OCI-LY7 (cell line): ENCODE measurements at regions of chr2 and their contacts with region 1.

Region 1: DNA sequence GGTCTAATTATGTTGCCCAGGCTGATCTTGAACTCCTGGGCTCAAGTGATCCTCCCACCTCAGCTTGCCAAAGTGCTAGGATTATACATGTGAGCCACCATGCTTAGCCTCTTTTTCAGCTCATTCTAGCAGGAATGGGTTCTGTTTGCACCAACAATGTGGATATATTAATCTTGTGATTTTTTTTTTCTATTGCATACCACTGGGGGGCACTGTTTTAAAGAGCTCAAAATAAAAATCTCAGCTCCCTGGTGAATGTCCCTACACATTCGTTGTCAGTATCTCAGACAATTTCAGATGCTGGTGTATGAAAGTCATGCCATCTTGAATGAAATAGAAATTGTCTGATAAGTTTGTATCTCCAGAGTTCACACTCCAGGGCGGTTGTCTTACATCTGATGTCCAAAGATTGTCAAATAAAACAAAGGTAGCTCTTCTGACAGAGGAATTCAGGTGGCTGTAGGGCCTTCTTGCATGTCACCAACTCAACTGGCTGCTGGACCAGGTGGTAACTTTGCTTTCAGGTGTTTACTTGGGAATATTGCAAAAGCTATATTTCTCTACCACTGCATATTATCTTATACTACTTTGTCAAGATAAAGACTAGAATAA is 3.1 kb upstream of the MATN3 start:
- DNase-seq: peak; percentile 57
- H3K4me3 ChIP-seq: no peak overlapping the region
- H3K27ac ChIP-seq: no peak overlapping the region
- H3K4me1 ChIP-seq: no peaks in the 10 kb centered on the region
- CTCF ChIP-seq: peak; percentile 80

Region 2: DNA sequence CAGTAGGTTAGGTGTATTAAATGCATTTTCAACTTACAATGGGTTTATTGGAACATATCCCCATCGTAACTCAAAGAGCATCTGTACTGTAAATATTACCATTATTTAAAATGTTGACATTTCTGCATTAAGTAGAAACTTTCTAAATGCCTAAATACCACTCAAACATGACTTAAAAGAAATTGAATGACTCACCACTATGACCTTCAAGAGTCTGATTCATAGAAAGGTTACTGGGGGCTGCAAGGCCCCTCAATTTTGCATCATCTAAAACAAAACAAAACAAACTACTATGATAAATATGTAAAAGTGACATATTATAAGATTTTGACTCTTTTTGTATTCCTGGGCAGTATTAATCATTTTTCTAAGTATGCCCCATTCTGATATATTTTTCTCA is 33.3 kb before region 1 on chr2:
- CTCF ChIA-PET with region 1: no interaction called
- POLR2A ChIA-PET with region 1: no interaction called
- intact Hi-C with region 1: no loop called
- DNase-seq: no peak
- H3K4me3 ChIP-seq: no peak overlapping the region
- H3K27ac ChIP-seq: no peak overlapping the region
- H3K4me1 ChIP-seq: no peaks in the 10 kb centered on the region
- CTCF ChIP-seq: no peak

Region 3: DNA sequence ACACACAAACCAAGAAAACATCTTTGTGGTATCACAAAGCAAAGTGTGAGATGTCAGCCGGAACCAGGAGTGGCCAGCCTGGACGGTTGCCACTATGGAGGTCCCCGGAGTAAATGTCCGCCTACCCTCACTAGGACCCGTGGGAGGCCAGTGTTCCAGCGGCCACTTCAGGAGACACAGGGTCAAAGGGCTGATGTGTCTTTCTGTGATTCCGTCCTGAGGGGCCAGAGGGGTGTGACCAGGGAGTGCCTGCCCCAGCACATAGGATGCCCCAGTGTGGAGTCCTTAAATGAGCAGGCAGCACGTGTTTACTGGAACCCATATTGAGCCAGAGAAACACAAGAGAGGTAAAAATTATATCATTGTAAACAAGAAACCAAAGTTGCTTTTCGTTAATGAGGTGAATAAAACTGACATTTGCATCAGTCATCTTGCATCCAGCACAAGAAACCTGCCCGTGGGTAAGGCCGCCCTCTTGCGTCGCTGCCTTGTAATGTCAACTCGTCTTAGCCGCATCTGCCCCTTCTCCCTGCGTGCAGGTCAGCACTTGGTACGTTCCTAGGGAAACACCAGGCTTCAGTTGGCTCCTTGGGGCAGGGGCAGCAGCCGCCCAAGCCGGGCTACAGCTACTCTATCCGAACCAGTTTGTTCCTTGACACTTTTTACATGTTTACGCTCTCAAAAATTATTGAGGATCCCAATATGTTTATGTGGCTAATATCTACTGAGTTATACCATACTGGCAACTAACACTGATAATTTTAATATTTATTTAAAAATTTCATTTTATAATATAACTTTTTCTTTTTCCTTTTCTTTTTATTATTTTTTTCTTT is 82.5 kb after region 1 on chr2:
- CTCF ChIA-PET with region 1: interaction called, 4 read pairs
- POLR2A ChIA-PET with region 1: no interaction called
- intact Hi-C with region 1: loop called (anchors 1 kb)
- DNase-seq: peak; percentile 80
- H3K4me3 ChIP-seq: no peak overlapping the region
- H3K27ac ChIP-seq: no peak overlapping the region
- H3K4me1 ChIP-seq: no peaks in the 10 kb centered on the region
- CTCF ChIP-seq: peak; percentile 90

Region 4: GRCh38 chr2:20525041-20526035 is 509.8 kb after region 1 on chr2:
- CTCF ChIA-PET with region 1: no interaction called
- POLR2A ChIA-PET with region 1: no interaction called
- intact Hi-C with region 1: no loop called
- DNase-seq: no peak
- H3K4me3 ChIP-seq: no peak overlapping the region
- H3K27ac ChIP-seq: no peak overlapping the region
- H3K4me1 ChIP-seq: peaks cover 15% of the 10 kb centered on the region
- CTCF ChIP-seq: no peak